ENCODE measurements at regions of chr10 and their contacts with region 1.

Region 1: GRCh38 chr10:32256613-32257437 is 90.1 kb downstream of the EPC1 start:
- DNase-seq: peak; percentile 43 to 81 (median 67)
- ATAC-seq: peak; percentile 73
- H3K4me3 ChIP-seq: no peak overlapping the region
- H3K4me3 Mint-ChIP-seq: no peak overlapping the region
- H3K27ac ChIP-seq: no peak overlapping the region
- H3K27ac Mint-ChIP-seq: no peak overlapping the region
- H3K4me1 ChIP-seq: no peaks in the 10 kb centered on the region
- H3K4me1 Mint-ChIP-seq: peaks cover 5% of the 10 kb centered on the region
- H3K27me3 ChIP-seq: no peaks in the 10 kb centered on the region
- H3K27me3 Mint-ChIP-seq: no peaks in the 10 kb centered on the region
- CTCF ChIP-seq: peak; percentile 89

Region 2: GRCh38 chr10:32293581-32293980 is 36.8 kb after region 1 on chr10:
- CTCF ChIA-PET with region 1: no interaction called
- POLR2A ChIA-PET with region 1: no interaction called
- intact Hi-C with region 1: no loop called
- DNase-seq: no peak
- ATAC-seq: no peak
- H3K4me3 ChIP-seq: no peak overlapping the region
- H3K4me3 Mint-ChIP-seq: no peak overlapping the region
- H3K27ac ChIP-seq: no peak overlapping the region
- H3K27ac Mint-ChIP-seq: no peak overlapping the region
- H3K4me1 ChIP-seq: peaks cover 38% of the 10 kb centered on the region
- H3K4me1 Mint-ChIP-seq: peaks cover 41% of the 10 kb centered on the region
- H3K27me3 ChIP-seq: no peaks in the 10 kb centered on the region
- H3K27me3 Mint-ChIP-seq: no peaks in the 10 kb centered on the region
- CTCF ChIP-seq: no peak

Region 3: DNA sequence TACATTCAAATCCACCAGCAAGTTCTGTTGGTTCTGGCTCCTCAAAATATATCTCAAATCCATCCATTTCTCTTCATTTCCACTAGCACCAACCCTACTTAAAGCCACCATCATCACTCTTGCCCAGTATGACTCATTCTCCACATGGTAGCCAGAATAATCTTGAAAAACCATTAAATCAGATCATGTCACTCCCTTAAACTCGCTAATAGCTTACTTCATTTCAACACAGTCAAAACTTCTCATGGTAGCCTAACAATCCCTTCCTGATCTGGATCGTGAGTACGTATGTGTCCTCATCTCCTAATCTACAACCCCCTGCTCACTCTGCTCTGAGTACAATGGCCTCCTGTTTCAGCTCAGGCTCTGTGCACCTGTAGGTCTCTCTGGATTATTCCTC is 81.4 kb after region 1 on chr10:
- CTCF ChIA-PET with region 1: interaction called, 16 read pairs
- POLR2A ChIA-PET with region 1: no interaction called
- intact Hi-C with region 1: no loop called
- DNase-seq: no peak
- ATAC-seq: no peak
- H3K4me3 ChIP-seq: no peak overlapping the region
- H3K4me3 Mint-ChIP-seq: peak overlapping the region; percentile 9
- H3K27ac ChIP-seq: no peak overlapping the region
- H3K27ac Mint-ChIP-seq: peak overlapping the region; percentile 66
- H3K4me1 ChIP-seq: peaks cover 92% of the 10 kb centered on the region
- H3K4me1 Mint-ChIP-seq: peaks cover 93% of the 10 kb centered on the region
- H3K27me3 ChIP-seq: no peaks in the 10 kb centered on the region
- H3K27me3 Mint-ChIP-seq: no peaks in the 10 kb centered on the region
- CTCF ChIP-seq: no peak

Region 4: GRCh38 chr10:32367793-32368453 is 111.1 kb after region 1 on chr10:
- CTCF ChIA-PET with region 1: interaction called, 61 read pairs
- POLR2A ChIA-PET with region 1: interaction called, 5 read pairs
- intact Hi-C with region 1: loop called (anchors 1 kb)
- DNase-seq: peak; percentile 49 to 87 (median 78)
- ATAC-seq: peak; percentile 73
- H3K4me3 ChIP-seq: no peak overlapping the region
- H3K4me3 Mint-ChIP-seq: peak overlapping the region; percentile 23
- H3K27ac ChIP-seq: no peak overlapping the region
- H3K27ac Mint-ChIP-seq: peak overlapping the region; percentile 78
- H3K4me1 ChIP-seq: peaks cover 38% of the 10 kb centered on the region
- H3K4me1 Mint-ChIP-seq: peaks cover 65% of the 10 kb centered on the region
- H3K27me3 ChIP-seq: no peaks in the 10 kb centered on the region
- H3K27me3 Mint-ChIP-seq: no peaks in the 10 kb centered on the region
- CTCF ChIP-seq: peak; percentile 86

Measured in CD8-positive, alpha-beta T cell (primary cell).